Right ventricle myocardium superior (tissue), 1 donor: ENCODE measurements at regions of chr7 and their contacts with region 1.

Region 1: GRCh38 chr7:36487756-36488336 is 98.2 kb downstream of the ANLN start:
- DNase-seq: no peak
- ATAC-seq: peak; percentile 53

Region 2: DNA sequence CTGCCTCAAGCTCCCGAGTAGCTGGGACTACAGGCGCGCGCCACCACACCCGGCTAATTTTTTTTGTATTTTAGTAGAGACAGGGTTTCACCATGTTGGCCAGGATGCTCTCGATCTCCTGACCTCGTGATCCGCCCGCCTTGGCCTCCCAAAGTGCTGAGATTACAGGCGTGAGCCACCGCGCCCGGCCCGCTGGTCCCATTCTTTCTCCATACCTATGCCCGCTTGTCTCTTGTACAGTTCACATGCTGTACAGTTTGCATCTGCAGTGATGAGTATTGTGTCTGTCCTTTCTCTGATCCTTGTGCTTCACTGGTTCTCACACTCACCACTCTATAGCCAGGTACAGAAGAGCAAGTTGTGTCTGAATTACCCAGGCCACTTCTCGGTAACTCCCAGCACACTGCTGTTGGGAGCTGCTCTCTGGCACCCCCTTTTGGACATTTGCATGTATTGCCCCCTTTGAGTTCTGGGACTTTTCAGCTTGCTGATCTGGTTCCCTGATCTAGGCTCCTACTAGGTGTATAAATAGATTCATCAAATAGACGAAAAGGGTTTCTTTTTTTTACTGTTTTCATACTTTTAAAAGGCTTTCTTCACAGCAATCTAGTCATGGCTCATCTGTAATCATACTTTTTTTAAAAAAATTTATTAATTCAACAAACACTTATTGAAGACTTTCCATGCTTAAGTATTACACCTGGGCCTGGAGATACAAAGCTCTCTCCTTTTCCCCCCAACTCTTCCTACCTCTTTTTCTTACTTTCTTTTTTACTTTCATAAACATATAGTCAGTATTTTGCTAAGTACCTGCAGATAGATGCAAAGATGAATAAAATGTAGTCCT is 183.0 kb after region 1 on chr7:
- intact Hi-C with region 1: loop called (anchors 5 kb)
- DNase-seq: no peak
- ATAC-seq: peak; percentile 69

Region 3: DNA sequence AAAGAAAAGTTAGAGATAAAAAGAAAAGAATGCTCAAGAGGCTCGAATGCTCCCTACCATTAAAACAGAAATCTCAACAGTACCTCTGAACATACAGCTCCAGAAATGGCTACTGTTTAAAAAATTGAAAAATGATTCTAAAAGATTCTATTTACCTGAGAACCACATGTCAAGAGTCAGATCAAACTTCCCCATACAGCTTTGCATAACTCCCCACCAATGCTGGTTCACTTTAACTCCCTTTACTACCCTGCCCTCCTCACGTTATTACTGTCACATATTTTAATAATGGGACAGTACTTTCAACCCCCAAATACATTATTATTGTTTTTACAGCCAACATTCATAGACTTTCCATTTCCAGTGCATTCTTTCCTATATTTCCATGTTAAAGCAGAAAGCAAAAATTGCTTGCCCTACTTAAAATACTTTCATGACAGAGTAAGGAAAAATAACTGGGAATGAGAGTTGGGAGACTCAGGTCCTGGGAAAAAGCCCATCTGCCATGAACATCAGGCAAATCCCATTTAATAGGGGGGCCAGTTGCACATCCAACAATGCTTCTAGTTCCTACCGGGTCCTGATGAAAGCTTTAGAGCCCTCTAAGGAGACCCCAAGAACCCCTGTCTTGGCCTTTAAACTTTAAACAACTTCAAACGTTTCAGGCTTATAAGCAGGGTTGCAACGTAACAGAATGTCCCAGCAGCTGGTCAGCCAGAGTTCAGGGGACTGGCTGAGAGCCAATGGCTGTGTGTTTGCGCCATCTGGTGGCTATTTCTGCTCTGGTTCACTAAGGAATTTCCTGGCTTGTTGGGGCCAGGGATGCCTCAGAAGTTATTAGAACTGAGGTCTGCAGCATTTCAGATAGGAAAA is 713.4 kb after region 1 on chr7:
- intact Hi-C with region 1: loop called (anchors 1 kb)
- DNase-seq: peak; percentile 84
- ATAC-seq: peak; percentile 91